Activated T-helper 1 cell treated with anti-CD3 and anti-CD28 coated beads, Interleukin-12 subunit alpha, Interleukin-12 subunit beta, Interleukin-2, Interleukin-4 antibody, amounts not matched to agents 30 ng/mL and 10 ng/mL and 1 ng/mL, durations not matched to agents 14 hours and 24 hours and 36 hours (primary cell): ENCODE measurements at regions of chr18 and their contacts with region 1.

Region 1: DNA sequence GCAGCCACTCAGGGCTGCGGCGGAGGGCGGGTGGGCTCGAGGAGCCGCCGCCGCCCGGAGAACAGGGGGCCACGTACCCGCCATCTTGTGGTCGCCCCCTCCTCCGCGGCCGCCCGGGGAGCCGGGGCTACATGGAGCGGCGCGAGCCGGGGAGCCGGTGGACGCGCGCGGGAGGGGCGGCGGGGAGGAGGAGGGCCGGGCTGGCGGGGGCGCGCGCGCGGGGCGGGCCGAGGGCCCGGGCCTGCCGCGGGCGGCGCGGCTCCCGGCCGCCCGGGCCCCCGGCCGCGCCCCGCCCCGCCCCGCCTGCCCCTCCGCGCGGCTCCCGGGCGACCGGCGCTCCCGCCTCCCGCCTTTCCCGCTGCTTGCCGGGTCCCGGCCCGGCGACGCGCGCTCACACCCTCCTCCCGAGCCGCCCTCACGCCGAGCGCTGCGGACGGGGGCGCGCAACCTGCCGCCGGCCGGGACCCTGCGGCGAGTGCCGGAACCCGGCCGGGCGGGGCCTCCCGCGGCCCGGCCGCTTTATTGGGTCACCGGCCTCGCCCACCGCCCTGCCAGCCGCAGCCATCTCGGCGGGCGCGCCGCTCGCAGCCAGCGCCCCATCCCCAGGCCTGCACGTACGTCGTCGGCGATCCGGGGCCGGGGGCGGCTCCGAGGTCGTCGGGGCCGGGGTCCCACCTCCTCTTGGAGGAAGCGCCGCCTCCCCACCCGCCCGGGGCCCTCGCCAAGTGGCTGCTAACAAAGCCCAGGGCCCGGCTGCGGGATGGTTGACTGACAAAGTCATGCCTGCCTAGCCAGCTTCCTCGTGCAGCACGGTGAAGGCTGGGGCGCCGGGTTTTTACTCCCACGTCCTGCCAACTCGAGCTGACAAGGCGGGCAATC is at the start of gene PPP4R1:
- DNase-seq: peak; percentile 61
- H3K4me3 Mint-ChIP-seq: peak within 1 kb of the TSS; percentile 95
- H3K27ac Mint-ChIP-seq: peak within 1 kb of the TSS; percentile 92
- H3K4me1 Mint-ChIP-seq: peaks cover 42% of the 10 kb centered on the region
- H3K27me3 Mint-ChIP-seq: peaks cover 2% of the 10 kb centered on the region
- total RNA-seq, gene PPP4R1: 49.5 and 54.8 TPM in 2 replicates

Region 2: GRCh38 chr18:8608795-8609658 is 1005.6 kb before region 1 on chr18 and contains the start of gene RAB12:
- intact Hi-C with region 1: loop called (anchors 10 kb)
- DNase-seq: peak; percentile 83
- H3K4me3 Mint-ChIP-seq: peak within 1 kb of the TSS; percentile 91
- H3K27ac Mint-ChIP-seq: peak within 1 kb of the TSS; percentile 88
- H3K4me1 Mint-ChIP-seq: peaks cover 50% of the 10 kb centered on the region
- H3K27me3 Mint-ChIP-seq: peaks cover 12% of the 10 kb centered on the region
- total RNA-seq, gene RAB12: 18.9 and 19.2 TPM in 2 replicates

Region 3: DNA sequence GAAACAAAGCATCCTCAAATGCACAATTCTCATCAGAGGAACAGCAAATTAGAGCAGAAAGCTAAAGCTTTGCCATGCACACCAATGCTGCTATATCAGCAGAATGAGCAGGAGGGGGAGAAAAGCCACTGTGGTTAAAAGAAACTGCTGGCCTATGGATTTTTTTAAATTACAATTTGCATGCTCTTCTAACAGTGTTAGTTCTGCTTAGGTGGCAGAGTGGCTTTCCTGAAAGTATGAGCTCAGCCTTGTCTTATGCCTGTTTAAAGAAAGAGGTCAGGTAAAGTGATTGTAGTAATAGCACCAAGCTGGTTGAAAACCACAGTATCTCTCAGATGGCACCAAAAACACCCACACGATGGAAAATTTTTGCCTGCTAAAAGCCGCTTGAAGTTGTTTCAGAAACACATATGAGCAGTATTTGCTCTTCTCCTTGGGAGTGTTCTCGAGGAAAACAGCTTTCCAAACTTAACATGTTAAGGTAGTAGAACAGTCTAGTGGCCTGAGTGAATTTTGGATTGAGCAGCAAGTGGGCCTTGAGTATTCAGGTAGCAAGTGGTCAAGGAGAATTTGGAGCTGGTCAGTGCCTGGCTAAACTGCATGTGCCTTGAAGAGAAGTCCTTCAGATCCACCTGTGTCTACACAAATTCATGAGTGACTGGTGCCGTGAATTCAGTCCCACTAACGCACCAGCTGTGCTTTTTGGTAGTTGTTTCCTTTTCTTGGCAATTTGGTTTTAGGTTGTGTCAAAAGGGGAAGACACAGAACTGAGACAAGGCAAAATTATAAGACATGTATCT is 531.7 kb before region 1 on chr18:
- intact Hi-C with region 1: loop called (anchors 5 kb)
- DNase-seq: peak; percentile 51
- H3K4me3 Mint-ChIP-seq: peak overlapping the region; percentile 75
- H3K27ac Mint-ChIP-seq: peak overlapping the region; percentile 98
- H3K4me1 Mint-ChIP-seq: peaks cover 50% of the 10 kb centered on the region
- H3K27me3 Mint-ChIP-seq: no peaks in the 10 kb centered on the region

Region 4: GRCh38 chr18:9334329-9334972 is 280.2 kb before region 1 on chr18 and contains the start of gene TWSG1:
- intact Hi-C with region 1: loop called (anchors 5 kb)
- DNase-seq: peak; percentile 88
- H3K4me3 Mint-ChIP-seq: peak within 1 kb of the TSS; percentile 92
- H3K27ac Mint-ChIP-seq: peak within 1 kb of the TSS; percentile 49
- H3K4me1 Mint-ChIP-seq: peaks cover 33% of the 10 kb centered on the region
- H3K27me3 Mint-ChIP-seq: peaks cover 33% of the 10 kb centered on the region
- total RNA-seq, gene TWSG1: 10.6 and 11.3 TPM in 2 replicates

Region 5: DNA sequence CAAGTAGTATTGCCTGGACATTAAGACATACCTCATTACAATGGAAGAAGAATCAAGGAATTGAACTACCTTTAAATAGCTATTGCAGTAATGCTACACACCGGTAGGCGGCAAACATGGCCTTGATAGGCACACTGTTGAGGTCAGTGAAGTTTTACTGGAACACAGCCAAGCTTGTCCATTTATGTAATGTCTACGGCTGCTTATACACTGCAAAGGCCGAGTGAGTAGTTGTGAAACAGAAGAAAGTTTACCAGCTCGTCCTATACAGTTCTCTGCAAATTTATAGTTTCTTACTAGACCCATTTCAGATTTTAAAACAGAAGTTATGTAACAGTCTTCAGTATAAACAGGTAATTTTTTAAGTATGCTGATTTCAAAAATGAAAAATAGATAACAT is 39.1 kb before region 1 on chr18:
- intact Hi-C with region 1: no loop called
- DNase-seq: no peak
- H3K4me3 Mint-ChIP-seq: no peak overlapping the region
- H3K27ac Mint-ChIP-seq: no peak overlapping the region
- H3K4me1 Mint-ChIP-seq: no peaks in the 10 kb centered on the region
- H3K27me3 Mint-ChIP-seq: no peaks in the 10 kb centered on the region

Region 6: DNA sequence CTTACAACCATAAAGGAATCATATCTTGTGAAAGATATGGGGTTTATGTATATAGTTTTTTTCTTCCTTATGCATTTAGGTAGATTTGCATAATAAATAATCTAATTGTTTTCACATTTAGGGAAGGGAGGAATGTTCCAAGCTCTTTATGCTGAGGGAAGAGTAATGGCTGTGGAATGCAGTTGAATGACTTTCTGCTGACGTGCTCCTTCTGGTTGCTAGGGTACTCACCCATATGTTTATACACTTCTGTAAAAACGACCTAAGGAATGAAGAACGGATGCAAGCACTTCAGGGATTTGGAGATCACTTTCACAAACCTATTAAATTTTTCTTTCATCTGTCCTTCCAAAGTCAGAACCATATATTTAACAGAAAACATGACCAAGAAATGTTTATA is 28.9 kb after region 1 on chr18:
- intact Hi-C with region 1: no loop called
- DNase-seq: no peak
- H3K4me3 Mint-ChIP-seq: no peak overlapping the region
- H3K27ac Mint-ChIP-seq: no peak overlapping the region
- H3K4me1 Mint-ChIP-seq: no peaks in the 10 kb centered on the region
- H3K27me3 Mint-ChIP-seq: peaks cover 12% of the 10 kb centered on the region

Region 7: DNA sequence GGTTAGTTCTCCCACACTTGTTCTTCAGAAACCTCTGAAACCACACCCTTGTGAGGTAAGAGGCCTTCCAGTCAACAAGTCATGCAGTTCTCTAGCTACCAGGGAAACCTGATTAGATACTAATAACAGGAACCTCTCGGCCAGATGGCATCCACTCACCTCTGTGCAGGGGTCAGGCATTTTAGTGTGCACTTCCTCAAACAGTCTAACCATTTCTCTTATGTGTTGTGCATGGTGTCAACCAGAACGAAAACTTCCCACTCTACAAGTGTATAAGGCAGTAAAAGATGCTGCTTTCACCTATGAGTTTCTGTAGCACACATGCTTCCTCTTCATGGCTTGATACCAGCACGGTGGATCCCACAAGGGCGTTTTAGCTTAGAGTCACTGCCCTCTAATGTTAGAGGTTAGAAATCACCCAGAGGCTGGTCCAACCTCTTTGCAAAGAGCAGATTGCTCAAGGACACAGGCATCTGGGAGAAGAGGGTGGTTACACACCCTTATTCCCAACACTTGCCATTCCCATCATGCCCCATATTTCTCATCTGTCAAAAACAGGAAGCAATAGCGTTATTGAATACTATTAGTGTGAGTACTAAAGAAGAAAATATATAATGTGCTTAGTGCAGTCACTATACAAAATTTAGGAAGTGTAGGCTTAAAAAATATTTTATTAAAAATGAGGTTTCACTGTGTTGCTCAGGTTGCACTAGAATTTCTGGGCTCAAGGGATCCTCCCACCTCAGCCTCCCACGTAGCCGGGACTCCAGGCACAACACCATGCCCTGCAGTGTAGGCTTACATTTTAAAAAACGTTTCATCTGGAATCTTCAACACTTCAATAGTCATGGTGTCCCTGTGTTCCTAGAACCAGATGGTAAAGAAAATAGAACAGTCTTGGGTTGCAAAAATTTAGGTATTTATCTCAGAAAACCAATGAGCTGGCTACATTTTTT is 58.9 kb after region 1 on chr18:
- intact Hi-C with region 1: loop called (anchors 2 kb)
- DNase-seq: peak; percentile 7
- H3K4me3 Mint-ChIP-seq: no peak overlapping the region
- H3K27ac Mint-ChIP-seq: no peak overlapping the region
- H3K4me1 Mint-ChIP-seq: peaks cover 7% of the 10 kb centered on the region
- H3K27me3 Mint-ChIP-seq: peaks cover 18% of the 10 kb centered on the region

Region 8: DNA sequence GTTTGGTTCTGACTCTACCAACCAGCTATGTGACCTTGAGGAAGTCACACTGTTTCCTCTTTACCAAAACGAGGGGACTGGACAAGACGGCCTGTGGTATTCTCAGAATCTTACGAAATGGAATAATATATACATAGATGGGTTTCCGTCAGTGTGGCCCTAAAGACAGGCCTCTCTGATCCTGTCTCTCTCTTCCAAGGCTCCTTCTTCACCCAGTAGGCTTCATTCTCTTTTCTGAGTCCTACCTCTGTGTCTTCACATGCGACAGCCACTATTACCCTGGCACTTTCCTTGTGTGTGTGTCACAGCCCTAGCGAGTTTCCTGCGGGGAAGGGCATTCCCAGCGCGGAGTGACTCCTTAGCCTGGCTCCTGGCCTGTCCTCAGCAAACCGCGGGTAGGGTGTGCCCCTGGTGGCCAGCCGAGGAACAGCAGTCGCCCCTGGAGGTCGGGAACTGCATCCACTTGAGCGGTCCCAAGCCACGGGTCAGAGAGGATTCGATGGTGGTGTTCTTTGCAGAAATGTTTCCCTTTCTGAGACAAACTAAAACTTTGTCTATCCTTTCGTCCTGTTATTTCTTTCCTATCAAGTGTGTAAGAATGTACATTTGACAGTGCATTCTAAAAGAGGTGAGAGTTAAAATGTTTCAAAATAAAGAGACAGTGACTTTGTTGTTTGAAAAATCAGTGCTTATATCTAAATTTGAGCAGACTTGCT is 156.8 kb after region 1 on chr18:
- intact Hi-C with region 1: loop called (anchors 1 kb)
- DNase-seq: peak; percentile 40
- H3K4me3 Mint-ChIP-seq: no peak overlapping the region
- H3K27ac Mint-ChIP-seq: no peak overlapping the region
- H3K4me1 Mint-ChIP-seq: no peaks in the 10 kb centered on the region
- H3K27me3 Mint-ChIP-seq: peaks cover 8% of the 10 kb centered on the region

Region 9: GRCh38 chr18:9974279-9974915 is 359.8 kb after region 1 on chr18:
- intact Hi-C with region 1: no loop called
- DNase-seq: no peak
- H3K4me3 Mint-ChIP-seq: no peak overlapping the region
- H3K27ac Mint-ChIP-seq: no peak overlapping the region
- H3K4me1 Mint-ChIP-seq: no peaks in the 10 kb centered on the region
- H3K27me3 Mint-ChIP-seq: peaks cover 5% of the 10 kb centered on the region